CD4-positive, alpha-beta memory T cell (primary cell): ENCODE measurements at regions of chr7 and their contacts with region 1.

Region 1: DNA sequence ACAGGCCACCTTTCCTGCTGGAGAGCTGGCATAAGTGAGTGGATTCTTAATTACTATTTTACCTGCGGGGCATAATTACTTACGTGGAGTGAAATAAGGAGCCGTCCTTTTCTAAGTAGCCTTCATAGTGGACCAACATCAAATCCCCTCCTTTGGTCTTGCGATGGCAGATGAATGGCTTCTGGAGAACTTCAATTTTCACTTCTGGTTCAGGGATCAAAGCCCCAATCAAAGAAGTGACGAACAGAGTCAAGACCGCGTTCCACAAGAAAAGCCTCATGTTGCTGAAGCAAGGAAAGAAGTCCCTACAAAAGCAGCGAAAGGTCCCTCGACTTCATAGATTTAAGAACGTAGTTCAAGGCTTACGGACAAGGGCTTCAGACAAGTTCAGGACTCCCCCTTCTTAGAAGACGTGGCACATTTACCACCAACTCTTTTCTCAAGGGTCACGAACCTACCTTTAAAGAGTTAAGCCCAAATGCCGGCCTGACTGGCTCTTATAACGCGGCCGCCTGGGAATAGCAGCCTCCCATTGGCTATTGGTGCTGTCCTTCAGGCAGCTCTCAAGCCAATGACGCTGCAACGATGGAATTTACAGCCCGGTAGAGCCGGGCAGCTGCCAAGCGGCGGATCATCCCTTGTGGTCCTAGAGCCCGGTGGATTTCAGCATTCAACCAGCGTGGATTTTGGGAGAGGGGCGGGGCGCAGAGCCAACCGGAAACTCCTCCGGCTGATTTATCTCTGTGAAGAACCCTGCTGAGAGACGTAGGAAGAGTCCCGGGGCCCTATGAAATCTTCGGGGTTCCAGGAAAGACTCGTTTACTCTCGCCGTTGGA is at the start of gene FKBP14:
- DNase-seq: peak; percentile 88 to 94 (median 91)
- H3K4me3 ChIP-seq: peak within 1 kb of the TSS; percentile 70 to 87
- H3K4me3 Mint-ChIP-seq: peak within 1 kb of the TSS in 5 of 8 donors; percentile 94 to 98 (median 95)
- H3K27ac ChIP-seq: peak within 1 kb of the TSS; percentile 63
- H3K27ac Mint-ChIP-seq: peak within 1 kb of the TSS; percentile 85 to 95 (median 93)
- H3K4me1 ChIP-seq: peaks cover 45% of the 10 kb centered on the region
- H3K4me1 Mint-ChIP-seq: peaks cover 26 to 47% (median 36%) of the 10 kb centered on the region in 4 donors
- H3K27me3 ChIP-seq: no peaks in the 10 kb centered on the region
- H3K27me3 Mint-ChIP-seq: no peaks in the 10 kb centered on the region
- total RNA-seq, gene FKBP14: 6.0 to 6.3 TPM

Region 2: GRCh38 chr7:30062591-30062990 is 36.1 kb after region 1 on chr7:
- CTCF ChIA-PET with region 1: interaction called, 12 read pairs
- POLR2A ChIA-PET with region 1: interaction called, 4 read pairs
- intact Hi-C with region 1: loop called (anchors 1 kb)
- DNase-seq: peak in 3 of 5 donors; percentile 8 to 16 (median 15)
- H3K4me3 ChIP-seq: no peak overlapping the region
- H3K4me3 Mint-ChIP-seq: no peak overlapping the region
- H3K27ac ChIP-seq: no peak overlapping the region
- H3K27ac Mint-ChIP-seq: no peak overlapping the region
- H3K4me1 ChIP-seq: no peaks in the 10 kb centered on the region
- H3K4me1 Mint-ChIP-seq: peaks cover 0 to 6% (median 2%) of the 10 kb centered on the region in 4 donors
- H3K27me3 ChIP-seq: no peaks in the 10 kb centered on the region
- H3K27me3 Mint-ChIP-seq: no peaks in the 10 kb centered on the region

Region 3: DNA sequence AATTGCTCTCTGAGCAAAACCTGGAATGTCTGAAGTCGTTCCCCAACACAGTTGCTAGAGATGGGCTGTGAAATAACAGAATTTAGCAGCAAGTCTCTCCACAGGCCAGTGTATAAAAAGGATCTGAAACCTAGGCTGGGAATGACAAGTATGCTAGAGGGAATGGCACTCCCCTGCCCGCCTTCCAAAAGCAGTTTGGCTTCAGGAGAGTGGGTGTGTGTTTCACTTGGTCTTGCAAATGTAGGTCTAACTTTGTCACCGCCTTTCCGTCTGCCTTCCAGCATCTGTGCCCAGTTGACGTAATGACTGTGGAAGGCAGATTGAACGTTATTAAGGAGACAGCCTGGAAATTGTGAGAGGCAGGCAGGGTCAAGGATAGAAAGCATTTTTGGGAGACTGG is 90.3 kb after region 1 on chr7:
- CTCF ChIA-PET with region 1: no interaction called
- POLR2A ChIA-PET with region 1: no interaction called
- intact Hi-C with region 1: no loop called
- DNase-seq: no peak
- H3K4me3 ChIP-seq: no peak overlapping the region
- H3K4me3 Mint-ChIP-seq: no peak overlapping the region
- H3K27ac ChIP-seq: no peak overlapping the region
- H3K27ac Mint-ChIP-seq: no peak overlapping the region
- H3K4me1 ChIP-seq: no peaks in the 10 kb centered on the region
- H3K4me1 Mint-ChIP-seq: peaks cover 3 to 7% (median 5%) of the 10 kb centered on the region in 4 donors
- H3K27me3 ChIP-seq: no peaks in the 10 kb centered on the region
- H3K27me3 Mint-ChIP-seq: no peaks in the 10 kb centered on the region

Region 4: GRCh38 chr7:30284298-30285066 is 258.0 kb after region 1 on chr7 and contains the start of gene ZNRF2:
- CTCF ChIA-PET with region 1: no interaction called
- POLR2A ChIA-PET with region 1: no interaction called
- intact Hi-C with region 1: loop called (anchors 1 kb)
- DNase-seq: peak; percentile 97 to 100 (median 99)
- H3K4me3 ChIP-seq: peak within 1 kb of the TSS; percentile 57 to 62
- H3K4me3 Mint-ChIP-seq: peak within 1 kb of the TSS; percentile 83 to 95 (median 87)
- H3K27ac ChIP-seq: peak within 1 kb of the TSS; percentile 68
- H3K27ac Mint-ChIP-seq: peak within 1 kb of the TSS; percentile 72 to 97 (median 95)
- H3K4me1 ChIP-seq: peaks cover 44% of the 10 kb centered on the region
- H3K4me1 Mint-ChIP-seq: peaks cover 32 to 55% (median 38%) of the 10 kb centered on the region in 4 donors
- H3K27me3 ChIP-seq: no peaks in the 10 kb centered on the region
- H3K27me3 Mint-ChIP-seq: peaks cover 0 to 1% of the 10 kb centered on the region in 2 donors
- total RNA-seq, gene ZNRF2: 37.3 to 39.4 TPM

Region 5: GRCh38 chr7:30504347-30505173 is 478.1 kb after region 1 on chr7 and contains the start of gene GGCT:
- CTCF ChIA-PET with region 1: no interaction called
- POLR2A ChIA-PET with region 1: no interaction called
- intact Hi-C with region 1: loop called (anchors 2 kb)
- DNase-seq: peak; percentile 94 to 98 (median 96)
- H3K4me3 ChIP-seq: peak within 1 kb of the TSS; percentile 96 to 97
- H3K4me3 Mint-ChIP-seq: peak within 1 kb of the TSS; percentile 90 to 96 (median 94)
- H3K27ac ChIP-seq: peak within 1 kb of the TSS; percentile 72
- H3K27ac Mint-ChIP-seq: peak within 1 kb of the TSS; percentile 76 to 98 (median 94)
- H3K4me1 ChIP-seq: peaks cover 26% of the 10 kb centered on the region
- H3K4me1 Mint-ChIP-seq: peaks cover 26 to 32% (median 30%) of the 10 kb centered on the region in 4 donors
- H3K27me3 ChIP-seq: no peaks in the 10 kb centered on the region
- H3K27me3 Mint-ChIP-seq: no peaks in the 10 kb centered on the region
- total RNA-seq, gene GGCT: 11.0 to 11.9 TPM

Region 6: DNA sequence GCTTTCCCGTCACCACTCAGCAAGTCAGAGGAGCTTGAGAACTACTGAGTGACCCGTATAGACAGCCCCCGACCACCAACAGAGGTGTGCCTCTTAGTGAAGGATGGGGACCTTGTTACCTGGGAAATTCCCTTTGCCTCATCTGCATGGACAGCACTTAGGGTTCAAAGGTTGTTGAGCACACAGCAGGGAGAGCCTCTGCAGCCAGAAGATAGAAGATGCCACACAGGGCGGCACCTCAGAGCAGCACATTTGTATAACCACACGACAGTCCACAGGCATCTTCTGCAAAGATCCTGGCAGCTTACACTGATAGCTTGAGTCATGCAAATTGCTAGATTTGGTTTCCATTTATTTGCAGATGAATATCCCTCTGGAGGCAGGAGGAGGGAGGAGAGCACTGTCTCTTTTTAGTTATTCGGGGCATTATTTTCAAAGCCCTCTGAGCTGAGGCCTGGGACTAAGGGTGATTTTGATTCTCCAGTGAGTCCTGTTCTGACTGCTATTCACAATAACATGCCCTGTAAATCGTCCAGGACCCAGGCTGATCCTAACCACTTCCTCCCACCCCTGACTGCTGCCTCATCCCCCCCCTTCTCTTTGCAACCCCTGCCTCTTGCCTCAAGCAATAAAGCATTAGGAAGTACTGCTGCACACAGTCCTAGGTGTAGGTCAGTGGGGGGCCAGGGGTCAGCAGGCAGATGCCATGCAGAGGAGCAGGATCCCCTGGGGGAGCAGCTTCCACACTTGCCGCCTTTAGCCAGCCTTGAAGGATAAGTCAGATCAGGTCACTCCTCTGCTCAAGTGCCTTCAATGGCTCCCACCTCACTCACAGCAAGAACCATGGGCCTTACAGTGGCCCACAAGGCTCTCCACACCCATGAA is 700.9 kb after region 1 on chr7:
- CTCF ChIA-PET with region 1: no interaction called
- POLR2A ChIA-PET with region 1: interaction called, 4 read pairs
- intact Hi-C with region 1: loop called (anchors 2 kb)
- DNase-seq: peak; percentile 77 to 82 (median 81)
- H3K4me3 ChIP-seq: peak overlapping the region; percentile 47 to 70
- H3K4me3 Mint-ChIP-seq: peak overlapping the region; percentile 87 to 96 (median 92)
- H3K27ac ChIP-seq: peak overlapping the region; percentile 57
- H3K27ac Mint-ChIP-seq: peak overlapping the region; percentile 85 to 96 (median 94)
- H3K4me1 ChIP-seq: peaks cover 60% of the 10 kb centered on the region
- H3K4me1 Mint-ChIP-seq: peaks cover 38 to 66% (median 50%) of the 10 kb centered on the region in 4 donors
- H3K27me3 ChIP-seq: no peaks in the 10 kb centered on the region
- H3K27me3 Mint-ChIP-seq: no peaks in the 10 kb centered on the region